Posterior cingulate gyrus (tissue), 11 donors: ENCODE measurements at regions of chr1 and their contacts with region 1.

Region 1: GRCh38 chr1:70354332-70355110 is at the start of gene ANKRD13C:
- DNase-seq: peak; percentile 85 to 99 (median 92)

Region 2: DNA sequence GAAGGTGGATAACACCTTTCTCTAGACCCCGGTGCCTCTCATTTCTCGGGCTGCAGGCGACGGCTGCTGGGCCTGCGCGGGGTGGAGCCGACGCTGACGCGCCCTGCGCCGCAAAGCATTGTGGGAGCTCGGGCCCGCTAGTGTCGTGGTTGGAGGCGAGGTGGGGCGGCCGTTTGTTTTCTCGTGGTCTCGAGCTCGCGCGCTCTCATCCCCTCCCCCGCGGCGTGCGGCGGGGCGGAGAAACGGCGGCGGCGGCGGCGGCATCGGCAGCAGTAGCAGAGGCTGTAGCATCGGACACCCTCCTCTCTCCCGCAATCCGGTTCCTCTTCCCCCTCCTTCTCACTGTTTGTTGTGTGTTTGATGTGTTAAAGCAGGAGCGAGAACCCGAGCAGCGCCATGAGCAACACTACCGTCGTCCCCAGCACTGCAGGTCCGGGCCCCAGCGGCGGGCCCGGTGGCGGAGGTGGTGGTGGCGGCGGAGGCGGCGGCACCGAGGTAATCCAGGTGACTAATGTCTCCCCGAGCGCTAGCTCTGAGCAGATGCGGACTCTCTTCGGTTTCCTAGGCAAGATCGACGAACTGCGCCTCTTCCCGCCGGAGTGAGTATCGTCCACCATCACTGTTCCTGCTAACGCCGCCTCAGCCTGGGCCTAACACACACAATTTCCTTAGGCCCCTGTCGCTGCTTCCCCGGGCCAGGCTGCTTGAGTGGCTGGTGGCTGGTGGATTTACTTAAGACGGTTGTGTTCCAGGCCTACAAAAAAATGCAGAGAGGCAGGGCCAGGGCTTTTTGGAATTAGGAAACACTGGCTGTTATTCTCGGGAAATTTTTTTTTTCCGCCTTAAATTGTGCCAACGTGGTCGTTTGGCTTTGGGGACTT is 133.0 kb before region 1 on chr1 and contains the start of gene SRSF11:
- intact Hi-C with region 1: loop called (anchors 2 kb)
- DNase-seq: peak; percentile 93 to 99 (median 96)

Region 3: GRCh38 chr1:70333203-70333602 is 21.3 kb before region 1 on chr1:
- intact Hi-C with region 1: no loop called
- DNase-seq: no peak

Region 4: GRCh38 chr1:70410604-70411359 is 56.3 kb after region 1 on chr1 and contains the start of gene CTH:
- intact Hi-C with region 1: loop called (anchors 2 kb)
- DNase-seq: peak; percentile 95 to 100 (median 98)

Region 5: DNA sequence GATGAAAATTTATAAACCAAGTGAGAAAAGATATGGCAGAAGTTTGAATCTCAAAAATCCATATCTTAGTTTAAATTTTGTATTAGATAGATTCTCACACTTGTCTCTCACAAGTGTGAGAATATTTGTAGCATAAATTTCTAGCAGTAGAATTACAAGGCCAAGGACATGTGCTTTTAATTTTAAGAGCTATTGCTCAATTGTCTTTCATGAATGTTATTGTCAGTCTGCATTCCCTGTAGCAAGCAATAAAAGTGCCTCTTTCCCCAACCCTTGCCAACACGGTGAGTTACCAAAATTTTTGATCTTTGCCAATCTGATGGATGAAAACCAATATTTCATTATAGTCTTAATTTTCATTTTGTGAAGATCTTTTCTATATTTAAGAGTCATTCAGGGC is 120.5 kb after region 1 on chr1:
- intact Hi-C with region 1: no loop called
- DNase-seq: no peak